ENCODE measurements at regions of chr9 and their contacts with region 1.

Region 1: DNA sequence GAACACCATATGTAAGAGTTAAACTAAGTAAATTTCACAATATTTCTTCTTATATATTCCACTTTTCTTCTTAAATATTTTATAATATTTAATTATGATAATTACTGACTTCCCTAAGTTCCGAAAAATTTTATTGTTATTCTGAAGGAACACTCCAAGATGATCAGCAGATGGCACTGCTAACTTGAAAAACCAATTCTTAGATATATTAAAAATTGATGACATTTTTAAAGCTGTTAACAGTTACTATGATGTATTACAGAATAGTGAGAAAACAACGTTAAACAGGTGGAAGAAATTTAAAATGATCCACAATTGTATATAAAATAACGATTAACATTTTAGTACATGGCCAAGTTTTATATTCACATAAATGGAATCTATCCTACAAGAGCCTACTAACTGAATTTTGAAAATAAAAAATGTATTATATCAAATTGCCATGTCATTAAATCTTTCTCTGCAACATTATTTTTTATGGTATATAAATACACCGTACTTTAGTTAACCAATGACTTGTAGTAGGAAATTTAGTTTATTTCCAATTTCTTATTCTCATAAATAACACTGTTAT is 30.1 kb upstream of the MUSK start:
- DNase-seq: no peak
- H3K4me3 ChIP-seq: no peak overlapping the region
- H3K27ac ChIP-seq: no peak overlapping the region
- H3K4me1 ChIP-seq: no peaks in the 10 kb centered on the region
- H3K27me3 ChIP-seq: no peaks in the 10 kb centered on the region
- CTCF ChIP-seq: peak in 2 of 11 experiments; percentile 22 to 25
- POLR2A ChIP-seq: no peak

Region 2: GRCh38 chr9:109730228-109730627 is 908.2 kb before region 1 on chr9:
- intact Hi-C with region 1: no loop called
- DNase-seq: no peak
- H3K4me3 ChIP-seq: no peak overlapping the region
- H3K27ac ChIP-seq: no peak overlapping the region
- H3K4me1 ChIP-seq: no peaks in the 10 kb centered on the region
- H3K27me3 ChIP-seq: peaks cover 0 to 8% (median 0%) of the 10 kb centered on the region in 7 donors
- CTCF ChIP-seq: no peak
- POLR2A ChIP-seq: no peak

Region 3: DNA sequence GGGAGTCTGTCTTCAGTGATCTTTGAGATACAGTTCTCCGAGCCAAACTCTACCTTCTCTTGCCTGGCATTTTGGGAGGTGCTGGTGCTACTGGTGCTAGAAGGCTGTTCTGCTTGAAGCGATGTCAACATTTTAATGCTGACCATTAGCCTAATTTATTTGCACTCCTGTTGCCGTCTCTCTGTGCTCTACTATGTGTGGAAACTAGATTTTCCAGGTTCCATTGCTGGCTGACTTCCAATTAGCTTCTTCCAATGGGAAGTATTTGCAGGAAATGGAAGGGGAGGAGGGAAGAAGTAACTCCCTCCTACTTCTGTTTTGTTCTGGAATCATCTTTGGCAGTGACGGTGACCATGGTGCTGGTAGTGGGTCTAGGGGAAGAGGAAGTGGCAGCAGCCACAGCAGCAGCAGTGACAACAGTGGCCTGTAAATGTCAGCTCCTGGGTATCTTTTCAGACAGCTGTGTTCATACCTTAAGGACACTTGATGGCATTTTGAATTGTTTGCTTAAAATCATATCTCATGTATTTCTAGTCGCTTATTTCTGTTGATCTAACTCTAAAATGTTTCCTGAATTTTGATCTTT is 308.7 kb before region 1 on chr9:
- intact Hi-C with region 1: no loop called
- DNase-seq: no peak
- H3K4me3 ChIP-seq: no peak overlapping the region
- H3K27ac ChIP-seq: peak overlapping the region in 1 of 8 donors; percentile 13
- H3K4me1 ChIP-seq: peaks cover 0 to 11% (median 2%) of the 10 kb centered on the region in 6 donors
- H3K27me3 ChIP-seq: no peaks in the 10 kb centered on the region
- CTCF ChIP-seq: no peak
- POLR2A ChIP-seq: no peak

Region 4: DNA sequence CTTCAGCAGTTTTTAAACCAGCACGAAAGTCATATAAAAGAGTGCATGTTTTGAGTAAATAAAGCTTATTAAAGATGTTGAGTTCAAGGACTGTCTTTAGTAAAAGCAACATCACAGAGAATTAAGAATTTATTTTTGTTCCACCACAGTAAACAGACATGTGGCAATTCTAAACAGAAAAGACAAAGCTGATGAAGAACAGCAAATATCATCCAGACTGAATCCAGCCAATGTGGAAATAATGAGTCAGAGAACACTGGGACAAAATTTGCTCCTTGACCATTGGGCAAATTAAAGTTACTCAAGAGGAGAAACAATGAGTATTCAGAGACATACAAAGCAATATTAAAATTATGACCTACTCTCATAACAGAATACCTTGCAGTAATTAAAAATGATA is 662.7 kb after region 1 on chr9:
- intact Hi-C with region 1: loop called (anchors 5 kb)
- DNase-seq: no peak
- H3K4me3 ChIP-seq: no peak overlapping the region
- H3K27ac ChIP-seq: no peak overlapping the region
- H3K4me1 ChIP-seq: peaks cover 0 to 4% (median 0%) of the 10 kb centered on the region in 6 donors
- H3K27me3 ChIP-seq: peaks cover 0 to 7% (median 0%) of the 10 kb centered on the region in 7 donors
- CTCF ChIP-seq: no peak
- POLR2A ChIP-seq: no peak

Measured in spleen (tissue), 13 donors.